ENCODE measurements at regions of chr6 and their contacts with region 1.

Region 1: GRCh38 chr6:136226027-136226673 is 24.0 kb downstream of the MTFR2 start:
- DNase-seq: peak; percentile 54 to 81 (median 62)
- ATAC-seq: peak; percentile 97
- H3K4me3 ChIP-seq: peak overlapping the region in 1 of 2 donors; percentile 7
- H3K27ac ChIP-seq: no peak overlapping the region
- H3K4me1 ChIP-seq: peaks cover 0 to 14% of the 10 kb centered on the region in 2 donors
- H3K27me3 ChIP-seq: no peaks in the 10 kb centered on the region
- CTCF ChIP-seq: peak; percentile 92 to 100

Region 2: GRCh38 chr6:135535989-135536414 is 690.1 kb before region 1 on chr6:
- intact Hi-C with region 1: loop called in 1 of 2 experiments (anchors 10 kb)
- DNase-seq: peak in 1 of 4 donors; percentile 55
- ATAC-seq: peak; percentile 62
- H3K4me3 ChIP-seq: no peak overlapping the region
- H3K27ac ChIP-seq: no peak overlapping the region
- H3K4me1 ChIP-seq: peaks cover 0 to 6% of the 10 kb centered on the region in 2 donors
- H3K27me3 ChIP-seq: no peaks in the 10 kb centered on the region
- CTCF ChIP-seq: peak; percentile 37 to 71